ENCODE measurements at regions of chr11 and their contacts with region 1.

Region 1: DNA sequence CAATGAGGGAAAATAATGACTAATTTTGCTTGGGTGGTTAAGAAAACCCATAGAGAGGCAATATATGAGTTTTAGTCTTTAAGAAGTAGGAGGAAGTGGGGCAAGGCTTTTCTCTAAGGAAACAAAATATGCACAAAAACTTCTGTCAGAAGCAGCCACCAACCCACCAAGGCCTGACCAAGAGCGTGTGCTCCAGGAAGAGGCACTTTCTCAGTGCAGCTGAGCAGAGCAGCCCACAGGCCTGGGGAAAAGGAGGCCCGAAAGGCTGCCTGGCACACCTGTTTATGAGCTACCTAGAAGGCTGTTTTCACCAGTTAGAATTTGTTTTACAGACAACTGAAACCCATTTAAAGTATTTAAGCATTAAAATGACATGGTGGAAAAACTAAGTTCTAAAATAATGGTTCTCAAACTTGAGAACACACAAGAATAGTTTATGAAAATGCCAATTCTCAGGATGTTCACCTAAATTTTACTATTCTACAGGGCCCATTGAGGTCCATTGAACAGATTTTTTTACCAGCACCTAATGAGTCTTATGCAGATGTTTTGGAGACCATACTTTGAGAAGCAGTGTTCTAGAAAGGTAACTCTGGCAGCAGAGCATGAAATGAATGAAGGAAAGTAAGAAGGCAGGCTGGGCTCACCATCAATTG is 160.5 kb upstream of the DDI1 start:
- DNase-seq: no peak
- H3K4me3 ChIP-seq: no peak overlapping the region
- H3K27ac ChIP-seq: no peak overlapping the region
- H3K4me1 ChIP-seq: no peaks in the 10 kb centered on the region
- H3K27me3 ChIP-seq: no peaks in the 10 kb centered on the region
- CTCF ChIP-seq: no peak
- POLR2A ChIP-seq: no peak

Region 2: DNA sequence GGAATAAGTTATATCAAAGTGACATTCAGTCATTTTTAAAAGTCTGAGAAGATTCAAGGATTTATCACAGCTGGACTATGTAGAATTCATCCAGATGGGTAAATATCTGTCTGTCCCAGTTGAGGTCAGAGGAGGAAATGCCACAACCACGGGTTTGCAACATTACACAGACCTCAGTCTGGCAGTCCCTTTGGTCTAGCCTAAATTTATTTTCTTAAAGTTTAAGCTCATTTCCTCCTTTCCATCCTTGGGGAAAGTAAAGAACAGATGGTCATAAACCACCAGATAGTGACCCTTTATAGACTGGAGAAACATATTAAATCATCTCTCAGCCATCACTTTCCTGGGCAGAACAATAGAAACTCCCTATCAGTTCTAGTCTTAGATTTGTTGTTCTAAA is 78.0 kb before region 1 on chr11:
- intact Hi-C with region 1: loop called (anchors 10 kb)
- DNase-seq: no peak
- H3K4me3 ChIP-seq: no peak overlapping the region
- H3K27ac ChIP-seq: no peak overlapping the region
- H3K4me1 ChIP-seq: no peaks in the 10 kb centered on the region
- H3K27me3 ChIP-seq: no peaks in the 10 kb centered on the region
- CTCF ChIP-seq: no peak
- POLR2A ChIP-seq: no peak

Region 3: GRCh38 chr11:103920449-103920848 is 44.5 kb after region 1 on chr11:
- intact Hi-C with region 1: no loop called
- DNase-seq: no peak
- H3K4me3 ChIP-seq: no peak overlapping the region
- H3K27ac ChIP-seq: no peak overlapping the region
- H3K4me1 ChIP-seq: no peaks in the 10 kb centered on the region
- H3K27me3 ChIP-seq: no peaks in the 10 kb centered on the region
- CTCF ChIP-seq: no peak
- POLR2A ChIP-seq: no peak

Measured in vagina (tissue), 2 donors.